Activated CD4-positive, alpha-beta T cell treated with anti-CD3 and anti-CD28 coated beads for 36 hours (primary cell): ENCODE measurements at regions of chr13 and their contacts with region 1.

Region 1: DNA sequence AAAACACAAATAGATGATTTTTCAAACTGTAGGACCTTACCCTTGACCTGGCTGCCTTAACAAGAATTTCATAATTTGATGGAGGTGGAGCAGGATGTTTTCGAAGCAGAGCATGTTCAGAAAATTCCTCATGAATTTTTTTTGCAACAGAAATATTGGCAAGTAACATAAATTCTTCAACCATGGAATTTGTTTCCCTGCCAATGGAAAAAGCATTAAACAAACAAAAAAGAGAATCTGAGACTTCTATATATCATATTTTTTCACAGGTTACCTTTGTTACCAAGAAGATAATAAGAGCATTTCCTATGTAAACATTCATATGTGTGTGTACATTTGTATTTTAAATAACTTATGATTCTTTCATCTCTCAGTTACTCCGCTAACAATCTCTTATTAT is 18.3 kb downstream of the DIS3 start:
- DNase-seq: no peak
- ATAC-seq: no peak
- H3K4me3 Mint-ChIP-seq: no peak overlapping the region
- H3K27ac Mint-ChIP-seq: no peak overlapping the region
- H3K4me1 Mint-ChIP-seq: no peaks in the 10 kb centered on the region
- H3K27me3 Mint-ChIP-seq: no peaks in the 10 kb centered on the region

Region 2: GRCh38 chr13:72620874-72621273 is 142.5 kb before region 1 on chr13:
- CTCF ChIA-PET with region 1: no interaction called
- POLR2A ChIA-PET with region 1: no interaction called
- intact Hi-C with region 1: no loop called
- DNase-seq: no peak
- ATAC-seq: no peak
- H3K4me3 Mint-ChIP-seq: no peak overlapping the region
- H3K27ac Mint-ChIP-seq: no peak overlapping the region
- H3K4me1 Mint-ChIP-seq: no peaks in the 10 kb centered on the region
- H3K27me3 Mint-ChIP-seq: peaks cover 12% of the 10 kb centered on the region

Region 3: GRCh38 chr13:72781451-72782439 is 18.3 kb after region 1 on chr13 and contains the starts of genes DIS3 and PIBF1:
- CTCF ChIA-PET with region 1: interaction called, 4 read pairs
- POLR2A ChIA-PET with region 1: no interaction called
- intact Hi-C with region 1: loop called in 1 of 2 experiments (anchors 2 kb)
- DNase-seq: peak; percentile 98
- ATAC-seq: peak; percentile 98
- H3K4me3 Mint-ChIP-seq: peak within 1 kb of the TSS; percentile 94
- H3K27ac Mint-ChIP-seq: peak within 1 kb of the TSS; percentile 97
- H3K4me1 Mint-ChIP-seq: peaks cover 55% of the 10 kb centered on the region
- H3K27me3 Mint-ChIP-seq: no peaks in the 10 kb centered on the region
- total RNA-seq, gene DIS3: 55.0 to 63.5 TPM
- total RNA-seq, gene PIBF1: 25.7 to 25.9 TPM

Region 4: GRCh38 chr13:73045031-73045430 is 281.6 kb after region 1 on chr13:
- CTCF ChIA-PET with region 1: no interaction called
- POLR2A ChIA-PET with region 1: no interaction called
- intact Hi-C with region 1: no loop called
- DNase-seq: no peak
- ATAC-seq: no peak
- H3K4me3 Mint-ChIP-seq: no peak overlapping the region
- H3K27ac Mint-ChIP-seq: no peak overlapping the region
- H3K4me1 Mint-ChIP-seq: no peaks in the 10 kb centered on the region
- H3K27me3 Mint-ChIP-seq: no peaks in the 10 kb centered on the region